H1 (cell line): ENCODE measurements at regions of chr17 and their contacts with region 1.

Region 1: DNA sequence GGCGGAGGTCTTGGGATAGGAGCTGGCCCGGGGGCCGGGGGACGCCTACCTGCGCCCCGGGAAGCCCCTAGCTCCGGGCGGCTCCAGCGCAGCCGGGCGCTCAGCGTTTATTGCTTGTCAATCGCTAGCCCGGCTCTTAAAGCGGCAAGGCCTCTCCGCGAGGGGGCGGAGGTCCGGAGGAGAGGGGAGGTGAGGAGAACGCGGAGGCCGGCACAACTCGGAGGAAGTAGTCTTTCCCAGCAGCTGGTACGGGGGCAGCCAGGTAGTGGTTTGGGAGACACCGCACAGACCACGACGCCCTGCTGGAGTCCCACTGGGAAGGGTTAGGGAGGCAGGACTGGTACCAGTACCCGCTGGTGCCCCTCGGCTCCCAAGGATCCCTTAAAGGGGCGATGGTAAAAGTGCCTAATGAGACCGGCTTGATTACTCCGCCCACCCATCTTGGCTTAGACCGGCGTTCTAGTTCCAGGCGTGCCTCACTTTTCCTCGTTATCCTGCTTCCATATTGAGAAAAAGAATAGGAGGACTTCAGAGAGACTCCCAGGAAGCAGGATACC is at the start of gene MPP2:
- DNase-seq: peak in 1 of 2 experiments; percentile 91
- H3K4me3 ChIP-seq: peak within 1 kb of the TSS; percentile 42 to 81 (median 68)
- H3K27ac ChIP-seq: no peak within 1 kb of the TSS
- H3K4me1 ChIP-seq: peaks cover 4 to 23% (median 19%) of the 10 kb centered on the region in 4 experiments
- H3K27me3 ChIP-seq: peaks cover 0 to 21% (median 15%) of the 10 kb centered on the region in 4 experiments; a peak in 5 of 7 replicates
- CTCF ChIP-seq: no peak
- EP300 ChIP-seq: no peak
- POLR2A ChIP-seq: no peak
- RAD21 ChIP-seq: no peak
- total RNA-seq, gene MPP2: 30.9 and 31.6 TPM in 2 replicates

Region 2: GRCh38 chr17:43832976-43833829 is 74.3 kb before region 1 on chr17 and contains the start of gene MPP3:
- CTCF ChIA-PET with region 1: no interaction called
- POLR2A ChIA-PET with region 1: no interaction called
- DNase-seq: peak in 1 of 2 experiments; percentile 68
- H3K4me3 ChIP-seq: peak within 1 kb of the TSS; percentile 44 to 87 (median 57)
- H3K27ac ChIP-seq: no peak within 1 kb of the TSS
- H3K4me1 ChIP-seq: peaks cover 0 to 11% (median 6%) of the 10 kb centered on the region in 4 experiments; a peak in 5 of 7 replicates
- H3K27me3 ChIP-seq: peaks cover 0 to 15% (median 13%) of the 10 kb centered on the region in 4 experiments; a peak in 6 of 7 replicates
- CTCF ChIP-seq: no peak
- EP300 ChIP-seq: no peak
- POLR2A ChIP-seq: no peak
- RAD21 ChIP-seq: no peak
- total RNA-seq, gene MPP3: 5.5 and 6.1 TPM in 2 replicates

Region 3: DNA sequence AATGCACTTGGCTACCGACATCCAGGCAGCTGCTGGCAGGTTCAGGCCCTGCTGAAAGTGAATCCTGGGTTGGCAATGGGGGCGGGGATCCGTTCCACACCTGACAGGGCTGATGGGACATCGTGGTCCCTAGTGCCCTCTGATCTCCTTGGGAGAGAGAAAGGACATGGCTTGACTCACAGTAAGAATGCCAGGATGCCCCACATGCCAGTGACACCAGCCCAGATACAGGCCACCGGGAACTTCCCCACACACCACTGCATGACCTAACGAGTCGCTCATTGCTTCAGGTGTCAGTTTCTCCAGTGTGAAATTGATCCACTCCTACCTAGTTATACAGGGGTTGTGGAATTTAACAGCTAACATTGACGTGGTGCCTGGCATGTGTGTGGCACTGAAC is 53.0 kb before region 1 on chr17:
- CTCF ChIA-PET with region 1: interaction called, 10 read pairs
- POLR2A ChIA-PET with region 1: no interaction called
- DNase-seq: no peak
- H3K4me3 ChIP-seq: no peak overlapping the region
- H3K27ac ChIP-seq: no peak overlapping the region
- H3K4me1 ChIP-seq: peaks cover 0 to 4% (median under 1%) of the 10 kb centered on the region in 4 experiments; a peak in 3 of 7 replicates
- H3K27me3 ChIP-seq: no peaks in the 10 kb centered on the region
- CTCF ChIP-seq: no peak
- EP300 ChIP-seq: no peak
- POLR2A ChIP-seq: no peak
- RAD21 ChIP-seq: no peak

Region 4: GRCh38 chr17:43888548-43888947 is 19.0 kb before region 1 on chr17:
- CTCF ChIA-PET with region 1: interaction called, 403 read pairs
- POLR2A ChIA-PET with region 1: interaction called, 6 read pairs
- DNase-seq: no peak
- H3K4me3 ChIP-seq: no peak overlapping the region
- H3K27ac ChIP-seq: no peak overlapping the region
- H3K4me1 ChIP-seq: peaks cover 9 to 17% (median 13%) of the 10 kb centered on the region in 4 experiments
- H3K27me3 ChIP-seq: no peaks in the 10 kb centered on the region
- CTCF ChIP-seq: no peak
- EP300 ChIP-seq: no peak
- POLR2A ChIP-seq: no peak
- RAD21 ChIP-seq: no peak

Region 5: GRCh38 chr17:43927060-43927864 is 19.8 kb after region 1 on chr17:
- CTCF ChIA-PET with region 1: interaction called, 87 read pairs
- POLR2A ChIA-PET with region 1: no interaction called
- DNase-seq: no peak
- H3K4me3 ChIP-seq: peak overlapping the region; percentile 10 to 55 (median 34); a peak in 5 of 8 replicates
- H3K27ac ChIP-seq: no peak overlapping the region
- H3K4me1 ChIP-seq: peaks cover 0 to 7% (median 0%) of the 10 kb centered on the region in 4 experiments; a peak in 1 of 7 replicates
- H3K27me3 ChIP-seq: peaks cover 3 to 28% (median 15%) of the 10 kb centered on the region in 4 experiments
- CTCF ChIP-seq: no peak
- EP300 ChIP-seq: no peak
- POLR2A ChIP-seq: no peak
- RAD21 ChIP-seq: no peak

Region 6: GRCh38 chr17:43946069-43946696 is 38.7 kb after region 1 on chr17:
- CTCF ChIA-PET with region 1: interaction called, 45 read pairs
- POLR2A ChIA-PET with region 1: no interaction called
- DNase-seq: no peak
- H3K4me3 ChIP-seq: no peak overlapping the region
- H3K27ac ChIP-seq: no peak overlapping the region
- H3K4me1 ChIP-seq: peaks cover 0 to 2% (median 0%) of the 10 kb centered on the region in 4 experiments; a peak in 2 of 7 replicates
- H3K27me3 ChIP-seq: no peaks in the 10 kb centered on the region; a peak in 2 of 7 replicates
- CTCF ChIP-seq: peak; percentile 22 to 29 (median 24); a peak in 3 of 4 replicates
- EP300 ChIP-seq: no peak
- POLR2A ChIP-seq: no peak
- RAD21 ChIP-seq: peak; percentile 21 to 46; a peak in 2 of 4 replicates

Region 7: DNA sequence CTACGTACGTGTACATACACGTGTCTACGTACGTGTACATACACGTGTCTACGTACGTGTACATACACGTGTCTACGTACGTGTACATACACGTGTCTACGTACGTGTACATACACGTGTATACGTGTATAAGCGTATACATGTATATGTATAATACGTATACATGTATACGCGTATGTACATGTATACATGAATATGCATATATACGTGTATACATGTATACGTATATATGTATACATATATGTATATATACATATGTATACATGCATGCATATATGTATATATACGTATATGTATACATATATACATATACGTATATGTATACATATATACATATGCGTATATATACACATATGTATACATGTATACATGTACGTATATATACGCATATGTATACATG is 68.4 kb after region 1 on chr17:
- CTCF ChIA-PET with region 1: no interaction called
- POLR2A ChIA-PET with region 1: no interaction called
- DNase-seq: no peak
- H3K4me3 ChIP-seq: no peak overlapping the region
- H3K27ac ChIP-seq: no peak overlapping the region
- H3K4me1 ChIP-seq: no peaks in the 10 kb centered on the region
- H3K27me3 ChIP-seq: no peaks in the 10 kb centered on the region
- CTCF ChIP-seq: no peak
- EP300 ChIP-seq: no peak
- POLR2A ChIP-seq: no peak
- RAD21 ChIP-seq: no peak

Region 8: DNA sequence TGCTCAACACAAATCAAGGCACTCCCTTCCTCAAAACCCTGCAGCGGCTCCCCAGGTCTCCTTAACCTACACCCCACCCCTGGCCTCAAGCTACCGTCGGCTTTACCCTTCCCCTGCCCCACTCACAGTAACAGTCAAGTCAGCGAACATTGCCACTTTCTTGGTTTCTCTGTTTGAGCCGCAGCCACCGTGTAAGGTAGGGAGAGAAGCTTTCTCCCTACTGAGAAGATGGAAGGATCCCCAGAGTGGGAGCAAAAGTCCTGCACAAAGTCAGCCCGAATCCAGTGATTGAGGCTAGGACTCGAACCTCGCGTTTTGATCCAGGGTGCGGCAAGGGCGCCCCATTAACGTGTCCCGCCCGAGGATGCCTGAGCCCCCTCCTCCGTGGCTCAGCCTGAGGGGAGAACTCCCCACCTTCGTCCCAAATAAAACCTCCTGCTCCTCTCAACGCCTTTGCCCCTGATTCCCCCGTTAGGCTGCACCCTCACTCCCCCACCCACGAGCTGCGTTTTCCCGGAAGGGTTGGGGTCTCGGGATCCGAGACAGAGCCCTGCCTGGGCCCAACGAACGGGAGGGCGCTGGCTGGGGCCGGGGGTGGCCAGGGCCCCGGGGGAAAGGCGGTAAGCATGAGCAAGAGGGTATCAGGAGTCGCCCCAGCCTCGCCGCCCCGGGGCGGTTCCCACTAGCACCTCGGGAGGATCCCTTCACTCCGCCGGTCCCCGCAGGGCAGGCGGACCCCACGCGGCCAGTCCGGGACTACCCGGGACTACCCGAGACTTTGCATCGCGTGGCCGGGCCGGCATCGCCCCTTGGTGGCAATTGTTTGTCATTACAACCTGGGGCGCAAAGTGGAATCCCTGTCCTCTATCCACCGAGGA is 87.0 kb after region 1 on chr17:
- CTCF ChIA-PET with region 1: interaction called, 11 read pairs
- POLR2A ChIA-PET with region 1: interaction called, 3 read pairs
- DNase-seq: peak in 1 of 2 experiments; percentile 92
- H3K4me3 ChIP-seq: peak overlapping the region; percentile 12 to 67 (median 42)
- H3K27ac ChIP-seq: no peak overlapping the region
- H3K4me1 ChIP-seq: peaks cover 0 to 2% (median 0%) of the 10 kb centered on the region in 4 experiments; a peak in 1 of 7 replicates
- H3K27me3 ChIP-seq: peaks cover 0 to 9% (median 4%) of the 10 kb centered on the region in 4 experiments; a peak in 5 of 7 replicates
- CTCF ChIP-seq: peak; percentile 81 to 97 (median 83)
- EP300 ChIP-seq: no peak
- POLR2A ChIP-seq: no peak
- RAD21 ChIP-seq: peak; percentile 91 to 94